ENCODE measurements at regions of chr2 and their contacts with region 1.

Region 1: GRCh38 chr2:178136321-178137025 is 24.2 kb downstream of the RBM45 start:
- DNase-seq: no peak
- ATAC-seq: no peak
- H3K4me3 ChIP-seq: no peak overlapping the region
- H3K27ac ChIP-seq: no peak overlapping the region
- H3K4me1 ChIP-seq: no peaks in the 10 kb centered on the region
- H3K27me3 ChIP-seq: no peaks in the 10 kb centered on the region

Region 2: DNA sequence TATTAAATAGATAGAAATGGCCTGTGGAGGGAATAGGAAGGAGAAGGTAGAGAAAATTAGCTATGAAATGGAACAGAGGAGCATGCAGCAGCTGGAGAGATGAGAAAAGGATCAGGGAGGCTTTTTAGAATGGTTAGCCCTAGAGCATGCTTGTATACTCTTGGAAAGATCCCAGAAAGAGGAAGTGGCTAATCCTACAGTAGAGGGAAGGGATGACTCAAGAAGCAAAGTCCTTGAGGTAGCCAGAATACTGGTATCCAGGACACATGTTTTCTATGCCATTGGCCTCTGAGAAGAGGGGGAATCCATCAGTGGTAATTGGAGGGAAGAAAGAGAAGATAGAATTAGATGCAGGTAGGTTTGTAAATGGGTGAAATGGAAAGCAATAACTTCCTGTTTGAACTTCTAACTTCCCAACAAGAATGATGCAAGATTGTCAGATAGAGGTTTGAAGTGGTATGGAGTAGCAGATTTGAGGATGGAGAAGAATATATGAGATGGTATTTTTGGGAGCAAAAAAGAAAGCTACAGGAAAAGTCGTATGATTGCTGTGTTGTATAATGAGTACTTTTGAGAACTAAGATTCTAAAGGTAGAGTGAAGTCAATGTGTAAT is 40.7 kb after region 1 on chr2:
- intact Hi-C with region 1: no loop called
- DNase-seq: no peak
- ATAC-seq: no peak
- H3K4me3 ChIP-seq: no peak overlapping the region
- H3K27ac ChIP-seq: no peak overlapping the region
- H3K4me1 ChIP-seq: no peaks in the 10 kb centered on the region
- H3K27me3 ChIP-seq: no peaks in the 10 kb centered on the region

Region 3: DNA sequence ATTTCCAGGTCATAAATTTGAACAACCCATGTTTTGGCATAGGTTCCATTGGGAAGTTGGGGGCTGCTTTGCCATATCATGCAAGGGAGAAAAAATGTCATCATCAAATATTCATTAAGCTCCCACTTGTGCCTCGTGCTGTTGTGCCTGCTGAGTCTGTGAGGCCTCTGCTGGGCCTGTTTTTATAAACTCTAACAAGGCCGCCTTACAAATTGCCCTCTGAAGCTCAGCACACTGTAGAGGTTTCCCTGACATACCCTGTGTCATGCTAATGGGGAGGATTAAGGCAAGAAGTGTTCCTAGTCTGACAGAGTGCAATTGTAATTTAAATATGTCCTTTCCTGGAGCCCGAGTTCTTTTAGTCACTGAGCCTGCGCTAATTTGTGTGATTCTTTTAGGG is 75.5 kb after region 1 on chr2:
- intact Hi-C with region 1: loop called in 1 of 2 experiments (anchors 10 kb)
- DNase-seq: no peak
- ATAC-seq: no peak
- H3K4me3 ChIP-seq: no peak overlapping the region
- H3K27ac ChIP-seq: no peak overlapping the region
- H3K4me1 ChIP-seq: no peaks in the 10 kb centered on the region
- H3K27me3 ChIP-seq: no peaks in the 10 kb centered on the region